ENCODE measurements at regions of chr1 and their contacts with region 1.

Region 1: DNA sequence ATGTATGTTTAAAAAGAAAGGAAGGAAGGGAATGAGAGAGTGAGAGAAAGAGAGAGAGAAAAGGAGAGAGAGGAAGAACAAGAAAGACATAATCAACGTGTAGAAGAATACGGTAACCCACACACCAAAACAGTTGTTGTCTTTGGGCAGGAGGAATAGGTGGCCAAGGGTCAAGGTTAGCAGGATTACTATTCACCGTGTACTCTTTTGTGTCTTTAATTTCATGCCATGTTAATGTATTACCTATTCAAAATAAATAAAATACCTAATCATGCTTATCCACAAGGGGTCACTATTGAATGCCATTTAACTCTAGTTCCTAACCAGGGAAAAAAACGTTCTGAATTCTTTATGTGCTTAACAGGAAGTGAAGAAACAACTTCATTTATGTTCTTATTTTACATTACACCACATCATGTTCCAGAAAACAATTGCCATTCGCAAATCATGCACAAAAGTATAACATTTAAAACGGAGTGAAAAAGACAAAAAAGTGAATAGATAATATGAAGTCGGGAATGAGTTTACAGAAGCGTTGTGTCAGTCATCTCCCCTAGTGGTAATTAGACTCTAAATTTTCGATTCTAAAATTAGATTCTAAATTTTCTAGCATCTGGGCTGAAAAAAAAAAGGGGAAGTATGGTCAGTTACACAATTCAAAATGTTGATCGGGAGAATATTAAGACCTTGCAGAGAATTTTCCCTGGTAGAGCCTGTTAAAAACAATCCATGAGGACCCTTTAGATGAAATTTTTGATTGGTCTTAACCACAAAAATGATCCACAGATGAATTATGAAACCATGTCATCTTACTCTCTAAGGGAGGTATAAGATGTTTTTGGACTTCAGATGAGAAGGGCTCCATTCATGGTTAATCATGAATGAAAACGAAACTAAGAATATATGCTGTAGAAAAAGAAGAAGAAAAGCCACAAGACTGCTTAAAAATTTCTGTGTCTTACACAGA is 700 bp upstream of the KMO start:
- DNase-seq: peak; percentile 79
- H3K4me3 ChIP-seq: peak overlapping the region; percentile 48
- H3K27ac ChIP-seq: peak overlapping the region; percentile 80
- H3K4me1 ChIP-seq: peaks cover 19% of the 10 kb centered on the region
- H3K27me3 ChIP-seq: no peaks in the 10 kb centered on the region
- CTCF ChIP-seq: peak; percentile 54

Region 2: DNA sequence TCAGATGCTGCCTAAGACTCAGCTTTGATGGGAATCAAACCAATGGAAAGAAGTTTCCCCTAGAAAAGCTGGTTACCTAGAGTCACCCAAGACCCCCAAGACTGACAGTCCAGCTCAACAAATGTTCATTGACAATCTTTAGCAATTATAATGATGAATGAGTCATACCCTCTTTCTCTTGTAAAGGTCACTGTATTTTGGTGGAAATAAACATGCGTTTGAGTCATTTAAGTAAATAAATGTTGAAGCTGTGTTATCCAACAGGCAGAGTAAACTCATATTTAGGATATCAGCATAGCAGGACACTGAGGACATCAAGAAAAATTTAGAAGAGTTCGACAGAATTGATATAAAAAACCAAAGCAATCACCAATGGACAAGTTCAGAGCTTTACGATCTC is 470.4 kb before region 1 on chr1:
- CTCF ChIA-PET with region 1: no interaction called
- POLR2A ChIA-PET with region 1: no interaction called
- intact Hi-C with region 1: no loop called
- DNase-seq: no peak
- H3K4me3 ChIP-seq: no peak overlapping the region
- H3K27ac ChIP-seq: no peak overlapping the region
- H3K4me1 ChIP-seq: no peaks in the 10 kb centered on the region
- H3K27me3 ChIP-seq: no peaks in the 10 kb centered on the region
- CTCF ChIP-seq: no peak

Region 3: DNA sequence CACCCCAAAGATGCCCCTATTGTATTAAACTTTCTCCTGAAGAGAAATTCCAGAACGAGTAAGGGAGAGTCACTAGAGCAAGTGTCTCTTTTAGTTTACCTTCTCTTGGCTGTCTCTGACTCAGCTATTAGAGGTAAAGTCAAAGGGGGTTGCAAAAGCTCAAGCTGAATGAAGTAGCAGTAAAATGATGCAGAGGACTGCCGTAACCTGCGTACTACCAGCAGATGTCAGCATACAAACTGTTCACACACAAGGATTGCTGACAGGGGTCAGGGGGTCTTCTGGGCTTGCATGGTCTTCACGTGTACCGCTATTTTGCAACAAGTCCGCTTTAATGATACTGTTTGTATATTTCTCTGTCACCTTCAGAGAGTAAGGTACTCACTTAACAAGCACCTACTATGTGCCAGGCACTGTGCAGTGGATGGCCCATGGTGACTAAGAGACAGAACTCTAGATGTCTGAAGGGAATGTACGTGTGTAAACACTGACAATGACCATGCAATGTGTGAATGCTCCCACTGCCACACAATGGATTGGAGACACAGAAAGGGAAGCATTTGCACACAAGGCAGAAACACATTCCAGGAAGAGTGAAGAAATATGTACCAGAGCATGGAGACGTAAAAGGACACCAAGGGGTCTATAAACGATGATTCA is 73.8 kb after region 1 on chr1:
- CTCF ChIA-PET with region 1: no interaction called
- POLR2A ChIA-PET with region 1: no interaction called
- intact Hi-C with region 1: loop called (anchors 5 kb)
- DNase-seq: peak; percentile 10
- H3K4me3 ChIP-seq: no peak overlapping the region
- H3K27ac ChIP-seq: no peak overlapping the region
- H3K4me1 ChIP-seq: no peaks in the 10 kb centered on the region
- H3K27me3 ChIP-seq: no peaks in the 10 kb centered on the region
- CTCF ChIP-seq: peak; percentile 50

Region 4: GRCh38 chr1:241627453-241628259 is 96.2 kb after region 1 on chr1:
- CTCF ChIA-PET with region 1: no interaction called
- POLR2A ChIA-PET with region 1: no interaction called
- intact Hi-C with region 1: loop called (anchors 5 kb)
- DNase-seq: peak; percentile 52
- H3K4me3 ChIP-seq: no peak overlapping the region
- H3K27ac ChIP-seq: no peak overlapping the region
- H3K4me1 ChIP-seq: peaks cover 18% of the 10 kb centered on the region
- H3K27me3 ChIP-seq: no peaks in the 10 kb centered on the region
- CTCF ChIP-seq: peak; percentile 50

Region 5: DNA sequence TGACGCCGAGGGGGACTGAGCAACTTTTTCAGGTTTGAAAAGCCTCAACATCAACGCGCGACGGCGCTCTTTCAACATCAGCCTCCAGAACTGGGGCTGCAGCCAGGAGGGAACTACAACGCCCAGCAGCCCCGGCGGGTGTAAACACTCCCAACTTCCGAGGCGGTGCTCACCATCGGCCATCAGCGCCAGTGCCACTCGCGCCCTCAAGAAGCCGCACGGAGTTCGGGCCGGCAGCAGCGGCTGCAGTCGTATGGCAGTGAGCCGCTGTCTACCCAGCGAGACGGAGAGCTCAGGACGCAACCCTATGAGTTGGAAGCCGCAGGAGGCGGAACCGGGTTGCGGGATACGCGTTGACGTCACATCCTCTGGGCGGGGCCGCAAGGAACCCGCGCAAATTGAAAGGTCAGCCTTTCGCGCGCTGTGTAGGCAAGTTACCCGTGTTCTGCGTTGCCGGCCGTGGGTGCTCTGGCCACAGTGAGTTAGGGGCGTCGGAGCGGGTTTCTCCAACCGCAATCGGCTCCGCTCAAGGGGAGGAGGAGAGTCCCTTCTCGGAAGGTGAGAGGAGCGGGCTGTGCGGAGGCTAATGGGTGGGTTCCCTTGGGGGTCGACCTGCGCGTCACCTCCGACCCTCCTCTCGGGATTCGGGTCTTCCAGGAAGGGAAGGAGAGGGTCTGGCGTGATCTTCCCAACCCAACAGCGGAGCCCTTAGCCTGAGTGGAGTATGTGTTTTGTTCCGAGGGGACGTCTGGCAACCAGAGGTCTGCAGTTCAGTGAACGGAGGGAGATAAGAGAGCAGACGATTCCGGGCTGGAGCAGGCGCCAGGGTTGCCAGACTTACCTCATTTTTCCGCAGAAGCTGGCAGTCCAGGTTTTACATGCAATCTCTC is 316.6 kb after region 1 on chr1 and contains the start of gene EXO1:
- CTCF ChIA-PET with region 1: no interaction called
- POLR2A ChIA-PET with region 1: no interaction called
- intact Hi-C with region 1: loop called (anchors 5 kb)
- DNase-seq: peak; percentile 91
- H3K4me3 ChIP-seq: peak within 1 kb of the TSS; percentile 75
- H3K27ac ChIP-seq: peak within 1 kb of the TSS; percentile 93
- H3K4me1 ChIP-seq: no peaks in the 10 kb centered on the region
- H3K27me3 ChIP-seq: no peaks in the 10 kb centered on the region
- CTCF ChIP-seq: peak; percentile 47
- total RNA-seq, gene EXO1: 37.7 and 46.6 TPM in 2 replicates

Region 6: GRCh38 chr1:241985787-241986186 is 454.3 kb after region 1 on chr1:
- CTCF ChIA-PET with region 1: no interaction called
- POLR2A ChIA-PET with region 1: no interaction called
- intact Hi-C with region 1: loop called (anchors 10 kb)
- DNase-seq: peak; percentile 30
- H3K4me3 ChIP-seq: no peak overlapping the region
- H3K27ac ChIP-seq: no peak overlapping the region
- H3K4me1 ChIP-seq: no peaks in the 10 kb centered on the region
- H3K27me3 ChIP-seq: no peaks in the 10 kb centered on the region
- CTCF ChIP-seq: peak; percentile 46

Measured in A673 (cell line).